Lower lobe of right lung (tissue), 2 donors: ENCODE measurements at regions of chr1 and their contacts with region 1.

Region 1: DNA sequence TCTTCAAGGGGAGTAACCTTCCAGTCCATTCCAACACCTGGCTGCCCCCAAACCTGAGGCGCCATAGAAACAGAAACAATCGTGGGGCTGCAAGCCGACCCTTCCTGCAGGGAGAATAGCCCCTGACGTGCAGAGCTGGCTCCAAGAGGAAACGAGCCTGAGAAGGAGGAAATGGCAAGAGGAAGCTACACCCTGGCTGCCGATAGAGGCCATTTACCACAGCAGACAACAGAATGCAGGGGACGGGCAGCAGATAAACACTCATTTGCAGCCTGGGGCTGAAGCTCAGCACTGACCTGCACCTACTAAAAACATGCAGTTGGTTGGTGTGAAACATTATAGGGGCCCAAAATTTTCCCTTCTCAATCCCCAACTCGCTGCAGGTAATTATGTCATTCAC is 8.7 kb upstream of the TDRD10 start:
- DNase-seq: peak; percentile 57
- ATAC-seq: peak; percentile 64 to 74
- H3K4me3 ChIP-seq: peak overlapping the region; percentile 9
- H3K27ac ChIP-seq: peak overlapping the region; percentile 47
- H3K4me1 ChIP-seq: peaks cover 84% of the 10 kb centered on the region
- H3K27me3 ChIP-seq: no peaks in the 10 kb centered on the region
- CTCF ChIP-seq: no peak

Region 2: DNA sequence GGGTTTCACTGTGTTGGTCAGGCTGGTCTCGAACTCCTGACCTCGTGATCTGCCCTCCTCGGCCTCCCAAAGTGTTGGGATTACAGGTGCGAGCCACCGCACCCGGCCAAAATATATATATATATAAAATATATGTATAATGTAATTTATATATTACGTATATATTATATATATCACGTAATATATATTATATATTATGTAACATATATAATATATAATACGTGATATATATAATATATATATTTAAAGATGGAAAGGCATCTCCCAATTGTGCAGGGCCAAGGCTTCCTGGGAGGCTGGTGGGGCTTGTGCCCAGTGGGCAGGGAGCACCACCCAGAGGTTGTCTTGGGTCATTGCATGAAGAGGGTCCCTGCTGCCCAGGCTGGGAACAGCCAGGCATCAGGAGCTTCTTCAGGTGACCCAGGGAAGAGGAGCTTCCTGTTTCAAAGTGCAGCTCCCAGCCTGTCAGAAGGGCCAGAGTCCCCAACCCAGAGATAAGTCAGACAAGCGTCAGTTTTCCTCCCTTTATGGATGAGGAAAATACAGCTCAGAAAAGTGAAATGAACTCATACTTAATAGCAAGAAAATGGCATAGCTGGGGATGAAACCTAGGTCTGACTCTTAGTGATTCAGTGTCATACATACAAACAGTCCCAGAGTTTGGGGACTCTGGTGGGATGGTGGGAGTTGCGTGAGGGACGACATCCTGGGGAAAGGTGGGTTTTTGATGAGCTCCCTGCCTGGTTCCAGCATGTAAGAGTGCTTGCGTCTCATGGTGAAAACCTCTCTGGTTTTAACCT is 53.2 kb after region 1 on chr1:
- intact Hi-C with region 1: loop called (anchors 10 kb)
- DNase-seq: peak; percentile 73
- ATAC-seq: peak; percentile 87 to 90
- H3K4me3 ChIP-seq: no peak overlapping the region
- H3K27ac ChIP-seq: no peak overlapping the region
- H3K4me1 ChIP-seq: peaks cover 18% of the 10 kb centered on the region
- H3K27me3 ChIP-seq: no peaks in the 10 kb centered on the region
- CTCF ChIP-seq: peak; percentile 84